GM12878 (cell line): ENCODE measurements at regions of chr22 and their contacts with region 1.

Region 1: GRCh38 chr22:38872172-38872830 is at the start of gene CBX6:
- DNase-seq: peak; percentile 37
- ATAC-seq: peak; percentile 42
- H3K4me3 ChIP-seq: peak within 1 kb of the TSS; percentile 89
- H3K27ac ChIP-seq: peak within 1 kb of the TSS; percentile 83
- H3K4me1 ChIP-seq: peaks cover 29% of the 10 kb centered on the region
- H3K27me3 ChIP-seq: no peaks in the 10 kb centered on the region
- CTCF ChIP-seq: no peak
- EP300 ChIP-seq: peak in 1 of 2 experiments; percentile 65; a peak in 1 of 4 replicates
- POLR2A ChIP-seq: peak; percentile 81
- RAD21 ChIP-seq: no peak
- polyA plus RNA-seq, gene CBX6: 3.6 to 4.5 TPM

Region 2: GRCh38 chr22:38740754-38741153 is 131.5 kb before region 1 on chr22:
- CTCF ChIA-PET with region 1: no interaction called
- POLR2A ChIA-PET with region 1: no interaction called
- RAD21 ChIA-PET with region 1: no interaction called
- SMC1A ChIA-PET with region 1: no interaction called
- in situ Hi-C with region 1: no loop called
- intact Hi-C with region 1: no loop called
- DNase-seq: no peak
- ATAC-seq: no peak
- H3K4me3 ChIP-seq: no peak overlapping the region
- H3K27ac ChIP-seq: no peak overlapping the region
- H3K4me1 ChIP-seq: no peaks in the 10 kb centered on the region
- H3K27me3 ChIP-seq: no peaks in the 10 kb centered on the region
- CTCF ChIP-seq: no peak
- EP300 ChIP-seq: no peak
- POLR2A ChIP-seq: no peak; the same call in none of the 2 replicates
- RAD21 ChIP-seq: no peak

Region 3: DNA sequence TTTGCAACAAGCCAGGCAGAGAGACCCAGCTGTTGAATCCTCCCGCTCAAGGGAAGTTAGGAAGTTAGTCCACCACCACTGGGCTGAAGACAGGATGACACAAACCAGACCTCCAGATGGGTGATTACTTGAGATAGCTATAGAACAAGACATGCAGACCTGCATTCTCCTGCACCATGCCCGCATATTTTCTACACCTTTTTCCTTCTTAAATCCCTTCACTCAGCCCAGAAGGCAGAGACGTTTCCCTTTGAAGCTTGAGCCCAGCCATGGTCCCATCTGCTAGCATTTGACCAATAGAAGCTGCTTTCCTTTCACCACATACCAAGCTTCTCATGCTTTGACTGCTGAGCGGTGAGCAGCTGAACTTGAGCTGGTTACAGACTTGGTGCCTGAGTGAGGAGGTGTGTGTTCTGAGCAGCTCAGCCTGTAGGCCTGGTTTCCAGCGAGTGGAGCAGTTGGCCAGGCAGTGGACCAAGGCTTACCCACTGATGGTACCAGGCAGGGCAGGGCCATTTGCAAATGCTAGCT is 28.9 kb after region 1 on chr22:
- CTCF ChIA-PET with region 1: interaction called, 21 read pairs
- POLR2A ChIA-PET with region 1: interaction called, 3 read pairs
- RAD21 ChIA-PET with region 1: interaction called, 6 read pairs
- SMC1A ChIA-PET with region 1: interaction called, 3 read pairs
- in situ Hi-C with region 1: no loop called
- intact Hi-C with region 1: no loop called
- DNase-seq: no peak
- ATAC-seq: peak; percentile 35
- H3K4me3 ChIP-seq: no peak overlapping the region
- H3K27ac ChIP-seq: no peak overlapping the region
- H3K4me1 ChIP-seq: peaks cover 9% of the 10 kb centered on the region; the same call in 1 of the 2 replicates
- H3K27me3 ChIP-seq: no peaks in the 10 kb centered on the region
- CTCF ChIP-seq: no peak
- EP300 ChIP-seq: no peak
- POLR2A ChIP-seq: no peak
- RAD21 ChIP-seq: no peak

Region 4: GRCh38 chr22:38941488-38941987 is 69.2 kb after region 1 on chr22:
- CTCF ChIA-PET with region 1: interaction called, 22 read pairs
- POLR2A ChIA-PET with region 1: interaction called, 7 read pairs
- RAD21 ChIA-PET with region 1: interaction called, 23 read pairs
- SMC1A ChIA-PET with region 1: interaction called, 9 read pairs
- in situ Hi-C with region 1: no loop called
- intact Hi-C with region 1: loop called (anchors 1 kb)
- DNase-seq: peak; percentile 88
- ATAC-seq: peak; percentile 91
- H3K4me3 ChIP-seq: peak overlapping the region; percentile 12
- H3K27ac ChIP-seq: peak overlapping the region; percentile 64
- H3K4me1 ChIP-seq: peaks cover 33% of the 10 kb centered on the region
- H3K27me3 ChIP-seq: no peaks in the 10 kb centered on the region
- CTCF ChIP-seq: no peak
- EP300 ChIP-seq: peak; percentile 61 to 62; a peak in 1 of 4 replicates
- POLR2A ChIP-seq: peak; percentile 36; the same call in 1 of the 2 replicates
- RAD21 ChIP-seq: no peak

Region 5: GRCh38 chr22:38973289-38974169 is 101.2 kb after region 1 on chr22:
- CTCF ChIA-PET with region 1: interaction called, 73 read pairs
- POLR2A ChIA-PET with region 1: interaction called, 3 read pairs
- RAD21 ChIA-PET with region 1: interaction called, 8 read pairs
- SMC1A ChIA-PET with region 1: interaction called, 12 read pairs
- in situ Hi-C with region 1: no loop called
- intact Hi-C with region 1: no loop called
- DNase-seq: no peak
- ATAC-seq: peak; percentile 94
- H3K4me3 ChIP-seq: no peak overlapping the region
- H3K27ac ChIP-seq: no peak overlapping the region
- H3K4me1 ChIP-seq: no peaks in the 10 kb centered on the region
- H3K27me3 ChIP-seq: no peaks in the 10 kb centered on the region; a peak in 1 of 4 replicates
- CTCF ChIP-seq: peak; percentile 91 to 96 (median 96)
- EP300 ChIP-seq: no peak
- POLR2A ChIP-seq: no peak
- RAD21 ChIP-seq: peak; percentile 90

Region 6: DNA sequence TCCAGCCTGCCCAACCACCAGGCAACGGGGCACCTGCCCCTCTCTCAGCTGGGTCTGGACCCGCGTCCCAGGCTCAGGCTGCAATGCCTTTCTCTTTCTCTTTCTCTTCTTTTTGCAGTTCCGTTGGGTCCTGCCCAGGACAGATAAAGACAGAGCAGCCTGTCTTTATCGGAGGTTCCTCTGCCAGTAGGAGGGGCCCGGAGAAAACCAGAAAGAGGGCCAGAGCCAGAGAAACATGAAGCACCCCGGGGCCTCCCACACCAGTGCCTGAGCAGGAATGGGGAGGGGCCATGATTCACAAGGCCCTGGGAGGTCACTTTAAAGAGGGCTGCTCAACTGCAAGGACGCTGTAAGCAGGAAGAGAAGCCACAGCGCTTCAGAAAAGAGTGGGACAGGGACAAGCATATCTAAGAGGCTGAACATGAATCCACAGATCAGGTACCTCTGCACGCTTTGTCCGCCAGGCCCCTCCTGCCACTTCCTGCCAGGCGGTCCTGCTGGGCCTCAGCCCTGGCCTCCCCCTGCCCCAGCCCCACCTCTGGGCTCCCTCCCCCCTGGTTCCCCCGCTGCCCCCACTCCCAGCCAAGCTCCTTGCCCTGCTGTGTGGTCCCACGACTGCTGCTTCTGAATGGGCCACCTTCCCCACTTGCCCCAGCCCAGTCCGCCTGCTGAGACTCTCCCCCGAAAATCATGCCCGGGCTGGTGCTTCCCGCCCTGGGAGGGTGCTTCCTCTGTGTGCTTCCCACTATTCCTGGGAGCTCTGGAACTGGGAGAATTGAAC is 141.8 kb after region 1 on chr22 and contains the start of gene APOBEC3C:
- CTCF ChIA-PET with region 1: interaction called, 18 read pairs
- POLR2A ChIA-PET with region 1: interaction called, 4 read pairs
- RAD21 ChIA-PET with region 1: interaction called, 11 read pairs
- SMC1A ChIA-PET with region 1: interaction called, 3 read pairs
- in situ Hi-C with region 1: no loop called
- intact Hi-C with region 1: no loop called
- DNase-seq: peak; percentile 79
- ATAC-seq: peak; percentile 97
- H3K4me3 ChIP-seq: peak within 1 kb of the TSS; percentile 98
- H3K27ac ChIP-seq: peak within 1 kb of the TSS; percentile 94
- H3K4me1 ChIP-seq: peaks cover 6% of the 10 kb centered on the region
- H3K27me3 ChIP-seq: no peaks in the 10 kb centered on the region
- CTCF ChIP-seq: peak; percentile 7 to 46 (median 15); a peak in 3 of 6 replicates
- EP300 ChIP-seq: no peak
- POLR2A ChIP-seq: peak; percentile 79
- RAD21 ChIP-seq: peak; percentile 43
- polyA plus RNA-seq, gene APOBEC3C: 258 to 290 TPM

Region 7: GRCh38 chr22:39152511-39153219 is 280.4 kb after region 1 on chr22 and contains the start of gene CBX7:
- CTCF ChIA-PET with region 1: interaction called, 16 read pairs
- POLR2A ChIA-PET with region 1: interaction called, 9 read pairs
- RAD21 ChIA-PET with region 1: interaction called, 7 read pairs
- SMC1A ChIA-PET with region 1: interaction called, 11 read pairs
- in situ Hi-C with region 1: no loop called
- intact Hi-C with region 1: loop called (anchors 5 kb)
- DNase-seq: peak; percentile 46
- ATAC-seq: peak; percentile 79
- H3K4me3 ChIP-seq: peak within 1 kb of the TSS; percentile 80
- H3K27ac ChIP-seq: peak within 1 kb of the TSS; percentile 73
- H3K4me1 ChIP-seq: peaks cover 41% of the 10 kb centered on the region
- H3K27me3 ChIP-seq: peaks cover 3 to 12% of the 10 kb centered on the region in 2 experiments
- CTCF ChIP-seq: no peak
- EP300 ChIP-seq: no peak
- POLR2A ChIP-seq: peak; percentile 73
- RAD21 ChIP-seq: no peak
- polyA plus RNA-seq, gene CBX7: 0.18 to 0.64 TPM